GM10248 (cell line): ENCODE measurements at regions of chr2 and their contacts with region 1.

Region 1: DNA sequence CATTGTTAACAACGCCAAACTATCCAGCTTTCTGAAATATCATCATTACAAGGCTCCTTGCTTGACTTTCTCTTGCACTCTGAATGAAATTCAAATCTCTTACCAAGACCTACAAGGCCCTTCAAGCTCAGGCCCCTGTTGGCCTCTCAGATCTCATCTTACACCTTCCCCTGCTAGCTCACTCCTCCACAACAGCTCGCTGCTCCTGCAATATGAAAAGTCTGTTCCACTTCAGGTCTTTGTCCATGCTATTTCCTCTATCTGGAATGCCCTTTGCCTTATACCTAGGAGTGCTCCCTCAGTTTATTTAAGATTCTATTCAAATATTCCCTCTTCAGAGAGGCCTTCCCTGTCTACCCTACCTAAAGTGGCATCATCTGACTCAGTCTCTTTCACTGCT is 91.7 kb downstream of the SESTD1 start:
- DNase-seq: no peak
- CTCF ChIP-seq: no peak

Region 2: GRCh38 chr2:179186126-179186525 is 13.2 kb after region 1 on chr2:
- CTCF ChIA-PET with region 1: interaction called, 12 read pairs
- POLR2A ChIA-PET with region 1: no interaction called
- DNase-seq: no peak
- CTCF ChIP-seq: no peak

Region 3: GRCh38 chr2:179218848-179219594 is 46.1 kb after region 1 on chr2:
- CTCF ChIA-PET with region 1: interaction called, 12 read pairs
- POLR2A ChIA-PET with region 1: no interaction called
- DNase-seq: peak; percentile 63
- CTCF ChIP-seq: peak; percentile 95